Heart right ventricle (tissue), 16 donors: ENCODE measurements at regions of chr17 and their contacts with region 1.

Region 1: GRCh38 chr17:49556223-49556971 is 19.3 kb upstream of the NXPH3 start:
- DNase-seq: peak; percentile 64 to 82
- ATAC-seq: peak; percentile 87 to 93 (median 92)
- H3K4me3 ChIP-seq: peak overlapping the region in 1 of 10 donors; percentile 17
- H3K27ac ChIP-seq: no peak overlapping the region
- H3K4me1 ChIP-seq: peaks cover 0 to 8% (median 3%) of the 10 kb centered on the region in 9 donors
- H3K27me3 ChIP-seq: peaks cover 0 to 6% (median 0%) of the 10 kb centered on the region in 7 donors
- CTCF ChIP-seq: peak; percentile 94 to 100 (median 99)

Region 2: DNA sequence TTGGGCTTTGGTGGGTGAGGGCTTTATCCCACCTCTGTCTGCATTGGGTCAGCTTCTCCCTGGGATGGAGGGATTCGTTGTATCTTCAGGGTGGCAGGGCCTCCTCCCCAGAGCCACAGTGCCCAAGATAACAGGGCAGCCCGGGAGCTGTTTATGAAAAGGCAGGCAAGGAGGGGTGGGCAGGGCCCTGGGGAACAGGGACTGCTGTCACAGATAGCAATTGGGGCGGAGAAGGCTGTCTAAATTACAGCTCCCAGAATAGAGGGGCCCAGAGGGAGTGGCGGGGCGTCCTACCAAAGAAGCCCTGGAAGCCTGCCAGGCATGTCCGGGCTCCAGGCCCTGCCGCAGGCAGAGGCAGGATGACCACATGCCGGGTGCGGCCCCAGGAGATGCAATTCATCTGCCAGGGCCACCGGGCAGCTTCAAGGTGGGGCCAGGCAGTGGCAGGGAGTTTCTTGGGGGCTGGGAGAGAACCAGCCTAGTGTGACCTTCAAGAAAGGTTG is 307.1 kb before region 1 on chr17:
- intact Hi-C with region 1: no loop called
- DNase-seq: peak; percentile 60 to 76
- ATAC-seq: peak; percentile 68 to 97 (median 92)
- H3K4me3 ChIP-seq: no peak overlapping the region
- H3K27ac ChIP-seq: peak overlapping the region in 3 of 10 donors; percentile 38 to 58 (median 55)
- H3K4me1 ChIP-seq: peaks cover 6 to 19% (median 9%) of the 10 kb centered on the region in 9 donors
- H3K27me3 ChIP-seq: no peaks in the 10 kb centered on the region
- CTCF ChIP-seq: no peak

Region 3: DNA sequence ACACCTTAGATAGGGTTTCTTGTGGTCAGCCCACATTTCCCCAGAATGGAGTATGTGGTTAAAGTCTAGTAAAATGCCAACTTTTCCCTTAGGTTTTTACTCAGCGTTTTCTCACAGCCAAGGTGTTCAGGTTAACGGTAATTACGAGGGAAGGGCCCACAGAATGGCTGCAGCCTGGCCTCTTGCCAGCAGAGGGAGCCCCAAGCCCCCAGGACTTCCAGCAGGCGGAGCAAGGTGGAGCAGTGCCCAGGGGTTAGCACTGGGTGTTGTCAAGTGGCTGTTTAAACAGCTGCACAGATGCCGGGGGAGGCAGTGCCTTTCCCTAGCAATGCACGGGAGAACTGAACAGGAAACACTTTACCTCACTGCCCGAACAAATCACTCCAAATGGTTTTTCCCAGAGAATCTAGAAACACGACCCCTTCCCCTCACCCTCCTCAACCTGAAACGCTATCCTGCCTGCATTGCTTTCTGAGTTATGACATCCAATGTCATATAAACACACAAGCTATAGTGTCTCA is 148.4 kb before region 1 on chr17:
- intact Hi-C with region 1: loop called in 3 of 10 experiments (anchors 5 to 10 kb)
- DNase-seq: peak; percentile 53 to 68
- ATAC-seq: peak; percentile 62 to 83 (median 74)
- H3K4me3 ChIP-seq: no peak overlapping the region
- H3K27ac ChIP-seq: no peak overlapping the region
- H3K4me1 ChIP-seq: peaks cover 0 to 13% (median 6%) of the 10 kb centered on the region in 9 donors
- H3K27me3 ChIP-seq: no peaks in the 10 kb centered on the region
- CTCF ChIP-seq: peak; percentile 37 to 78 (median 66)

Region 4: GRCh38 chr17:49414622-49415350 is 141.6 kb before region 1 on chr17 and contains the start of gene PHB1:
- intact Hi-C with region 1: loop called in 3 of 10 experiments (anchors 5 to 10 kb)
- DNase-seq: peak; percentile 92 to 98
- ATAC-seq: peak; percentile 100
- H3K4me3 ChIP-seq: peak within 1 kb of the TSS; percentile 48 to 97 (median 82)
- H3K27ac ChIP-seq: peak within 1 kb of the TSS in 9 of 10 donors; percentile 43 to 81 (median 71)
- H3K4me1 ChIP-seq: peaks cover 5 to 26% (median 16%) of the 10 kb centered on the region in 9 donors
- H3K27me3 ChIP-seq: peaks cover 0 to 3% (median 0%) of the 10 kb centered on the region in 7 donors
- CTCF ChIP-seq: no peak
- total RNA-seq, gene PHB1: 187 to 249 (median 215) TPM

Region 5: DNA sequence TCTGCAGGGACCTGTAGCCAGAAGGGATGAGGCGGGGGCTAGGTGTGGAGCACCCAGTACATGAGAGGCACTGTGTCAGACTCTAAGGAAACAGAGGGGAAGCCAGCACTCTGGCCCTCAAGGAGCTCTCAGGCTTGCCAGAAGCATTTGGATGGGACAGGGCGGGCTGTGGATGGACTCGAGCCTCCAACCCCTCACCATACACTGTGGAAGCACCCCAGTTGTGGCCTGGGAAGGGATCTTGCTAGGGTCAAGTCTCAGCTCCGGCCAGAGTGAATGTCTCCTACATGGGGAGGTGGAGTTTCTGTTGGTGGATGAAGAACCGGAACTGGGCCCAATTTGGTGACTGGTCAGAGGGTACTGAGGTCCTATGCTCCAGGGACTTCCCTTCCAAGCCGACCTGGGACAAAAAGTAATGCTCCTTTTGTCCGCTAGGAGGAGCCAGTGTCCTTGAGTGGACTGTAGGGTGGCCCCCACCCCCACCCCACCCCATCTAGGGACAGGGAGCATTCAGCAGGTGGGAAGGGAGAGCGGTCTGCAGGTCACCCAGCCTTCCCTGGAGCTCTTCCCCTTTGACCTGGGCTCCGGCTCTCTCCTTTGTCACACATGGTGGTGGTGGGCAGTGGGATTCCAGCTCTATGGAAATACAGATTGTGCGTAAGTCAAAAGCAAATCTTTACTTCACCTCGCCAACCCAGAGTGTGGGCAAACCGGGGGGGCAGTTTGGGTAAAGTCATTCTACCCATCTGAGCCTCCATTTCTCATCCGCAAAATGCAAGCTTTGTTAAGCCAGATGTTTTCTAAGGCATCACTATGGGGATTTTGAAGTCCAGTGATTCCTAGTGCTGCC is 121.4 kb before region 1 on chr17:
- intact Hi-C with region 1: loop called in 4 of 10 experiments (anchors 2 to 5 kb)
- DNase-seq: peak in 1 of 2 donors; percentile 43
- ATAC-seq: peak; percentile 32 to 74 (median 64)
- H3K4me3 ChIP-seq: no peak overlapping the region
- H3K27ac ChIP-seq: no peak overlapping the region
- H3K4me1 ChIP-seq: peaks cover 0 to 8% (median 0%) of the 10 kb centered on the region in 9 donors
- H3K27me3 ChIP-seq: peaks cover 0 to 34% (median 30%) of the 10 kb centered on the region in 7 donors
- CTCF ChIP-seq: peak; percentile 70 to 83 (median 76)

Region 6: DNA sequence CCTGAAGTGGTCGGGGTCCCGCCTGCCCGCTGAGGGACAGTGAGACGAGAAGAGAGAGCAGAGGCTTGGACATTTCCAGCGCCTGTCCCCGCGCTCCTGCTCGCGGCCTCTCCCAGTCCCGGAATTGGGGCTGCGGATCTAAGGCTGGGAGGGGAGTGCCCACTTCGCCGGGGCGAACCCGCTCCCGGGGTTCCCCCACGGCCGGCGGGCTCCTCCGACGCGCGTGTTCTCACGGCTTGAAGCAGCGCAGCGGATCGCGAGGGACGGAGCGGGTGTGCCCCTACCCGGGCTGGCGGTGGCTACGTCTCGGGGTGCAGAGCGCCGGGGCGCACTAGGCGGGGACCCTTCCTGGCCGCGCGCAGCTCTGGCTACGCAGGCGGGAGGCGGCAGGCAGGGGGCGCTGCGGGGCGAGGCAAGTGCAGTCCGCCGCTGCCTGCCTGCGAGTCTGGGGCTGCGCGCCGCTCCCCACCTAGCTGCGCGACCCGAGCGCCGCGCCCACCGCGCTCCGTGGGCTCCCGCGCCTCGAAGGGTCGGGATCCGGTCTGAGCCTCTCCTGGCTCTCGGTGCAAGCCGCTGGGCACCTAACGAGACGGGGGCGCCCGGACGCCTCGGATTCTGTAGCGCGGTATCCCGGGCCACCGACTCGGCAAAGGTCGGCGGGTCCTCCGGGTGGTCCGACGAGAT is 60.1 kb before region 1 on chr17:
- intact Hi-C with region 1: loop called in 6 of 10 experiments (anchors 1 to 2 kb)
- DNase-seq: peak; percentile 73 to 85
- ATAC-seq: peak; percentile 80 to 89 (median 87)
- H3K4me3 ChIP-seq: peak overlapping the region; percentile 36 to 68 (median 62)
- H3K27ac ChIP-seq: peak overlapping the region in 4 of 10 donors; percentile 29 to 53 (median 46)
- H3K4me1 ChIP-seq: peaks cover 0 to 40% (median 29%) of the 10 kb centered on the region in 9 donors
- H3K27me3 ChIP-seq: peaks cover 0 to 95% (median 71%) of the 10 kb centered on the region in 7 donors
- CTCF ChIP-seq: peak; percentile 79 to 93 (median 87)

Region 7: DNA sequence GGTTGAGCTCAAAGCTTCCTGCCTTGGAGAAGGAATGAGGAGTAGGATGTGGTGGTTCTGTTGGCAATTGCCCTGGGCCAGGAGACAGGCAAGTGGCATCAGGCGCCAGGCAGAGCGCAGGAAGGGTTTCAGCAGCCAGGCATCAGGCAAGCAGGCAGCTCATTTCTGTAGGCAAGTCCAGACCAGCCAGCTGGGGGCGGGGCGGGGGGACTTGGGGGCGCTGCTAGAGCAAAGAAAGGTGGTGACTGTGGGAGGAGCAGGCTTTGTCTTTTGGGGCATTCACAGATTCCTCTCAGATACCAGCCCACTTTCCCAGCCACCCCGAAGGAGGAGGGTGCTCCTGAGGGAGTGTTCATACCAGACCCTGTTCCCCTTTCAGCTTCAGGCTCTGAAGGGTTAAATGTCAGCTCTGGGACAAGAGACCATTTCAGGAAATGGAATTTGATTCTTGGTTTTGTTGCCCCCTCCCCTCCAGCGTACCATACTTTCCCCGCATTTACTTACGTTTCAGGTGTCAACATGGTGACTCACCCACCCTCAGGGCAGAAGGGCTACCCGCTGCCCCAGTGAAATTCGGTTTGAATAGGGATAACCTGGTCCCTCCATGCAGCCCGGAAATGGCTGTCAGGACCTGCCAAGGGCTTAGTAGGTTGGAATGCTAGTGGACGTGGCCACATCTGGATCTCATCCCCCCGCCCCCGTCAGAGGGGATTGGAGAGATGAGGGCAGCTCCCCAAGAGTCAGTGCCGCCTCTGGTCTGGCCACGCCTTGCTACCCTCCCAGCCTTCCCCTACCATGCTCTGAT is 48.1 kb before region 1 on chr17:
- intact Hi-C with region 1: no loop called
- DNase-seq: no peak
- ATAC-seq: no peak
- H3K4me3 ChIP-seq: no peak overlapping the region
- H3K27ac ChIP-seq: no peak overlapping the region
- H3K4me1 ChIP-seq: peaks cover 0 to 27% (median 3%) of the 10 kb centered on the region in 9 donors
- H3K27me3 ChIP-seq: peaks cover 0 to 61% (median 36%) of the 10 kb centered on the region in 7 donors
- CTCF ChIP-seq: no peak

Region 8: GRCh38 chr17:49766918-49767530 is 210.6 kb after region 1 on chr17:
- intact Hi-C with region 1: no loop called
- DNase-seq: no peak
- ATAC-seq: no peak
- H3K4me3 ChIP-seq: no peak overlapping the region
- H3K27ac ChIP-seq: no peak overlapping the region
- H3K4me1 ChIP-seq: peaks cover 0 to 20% (median 15%) of the 10 kb centered on the region in 9 donors
- H3K27me3 ChIP-seq: no peaks in the 10 kb centered on the region
- CTCF ChIP-seq: no peak